GM13977 (cell line): ENCODE measurements at regions of chr1 and their contacts with region 1.

Region 1: DNA sequence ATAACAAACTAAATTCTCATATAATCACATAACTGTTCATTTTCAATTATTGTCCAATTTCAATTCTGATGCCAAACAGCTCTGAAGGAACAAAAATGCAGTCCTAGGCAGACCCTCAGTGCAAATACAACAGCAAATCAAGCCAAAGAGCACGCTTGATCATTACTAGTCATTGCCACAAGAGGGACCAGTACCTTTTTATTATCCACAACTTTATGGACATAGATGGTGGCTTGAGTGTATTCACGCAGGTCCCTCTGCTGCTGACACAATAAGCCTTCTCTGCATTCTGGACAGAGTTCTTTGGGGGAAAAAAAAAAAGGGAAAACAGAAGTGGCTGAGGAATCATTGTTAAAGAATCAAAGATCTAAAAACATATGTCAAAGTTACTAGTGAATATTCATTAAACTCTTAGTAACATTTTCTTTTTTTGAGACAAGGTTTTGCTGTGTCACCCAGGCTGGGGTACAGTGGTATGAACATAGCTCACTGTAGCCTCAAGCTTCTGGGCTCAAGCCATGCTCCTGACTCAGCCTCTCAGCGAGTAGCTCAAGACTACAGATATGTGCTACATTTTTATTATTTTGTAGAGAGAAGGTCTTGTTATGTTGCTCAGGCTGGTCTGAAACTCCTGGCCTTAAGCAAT is 34.3 kb upstream of the RAP1GAP start:
- DNase-seq: no peak
- CTCF ChIP-seq: peak; percentile 42

Region 2: DNA sequence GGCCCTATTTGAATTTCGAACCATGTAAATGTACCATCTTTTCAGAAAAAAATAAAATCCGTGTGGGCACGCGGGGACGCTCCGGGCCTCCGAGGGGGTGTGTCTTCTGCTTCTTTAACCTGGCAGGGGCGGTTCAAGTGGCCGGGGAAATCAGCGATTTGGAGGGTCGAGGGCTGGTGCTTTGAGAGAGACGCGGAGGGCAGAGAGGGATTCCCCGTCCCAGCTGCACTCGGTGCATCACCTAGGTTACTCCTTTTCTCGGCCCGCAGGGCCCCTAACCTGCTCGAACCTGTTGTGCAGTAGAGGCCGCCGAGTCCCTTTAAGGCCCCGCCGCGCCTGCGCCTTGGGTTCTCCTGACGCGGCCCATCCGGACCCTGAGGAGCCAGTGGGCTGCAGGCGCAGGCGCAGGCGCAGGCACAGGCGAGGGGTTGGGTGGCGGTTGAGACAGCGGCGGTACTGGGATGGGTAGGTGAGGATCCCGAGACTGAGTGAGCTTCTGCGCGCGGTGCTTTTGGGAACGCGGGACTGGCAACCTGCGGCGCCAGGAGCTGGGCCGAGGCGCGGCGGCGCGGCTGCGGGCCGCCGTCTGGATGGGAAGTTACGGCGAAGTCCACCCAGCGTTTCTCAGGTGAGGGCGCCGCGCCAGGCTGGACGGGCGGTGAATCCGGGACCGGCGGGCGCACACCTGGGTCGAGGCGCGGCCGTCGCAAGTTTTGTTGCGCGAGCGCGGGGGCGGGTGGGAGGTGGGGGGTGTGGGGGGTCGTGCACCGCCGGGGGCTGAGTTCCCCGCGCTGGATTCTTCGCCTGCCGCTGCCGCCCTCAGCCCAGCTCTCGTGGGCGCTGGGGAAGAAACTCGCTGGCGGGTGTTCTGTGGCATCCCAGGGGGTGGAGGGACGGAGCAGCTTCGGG is 263.5 kb before region 1 on chr1 and contains the start of gene NBPF3:
- in situ Hi-C with region 1: no loop called
- DNase-seq: peak; percentile 94
- CTCF ChIP-seq: no peak

Region 3: DNA sequence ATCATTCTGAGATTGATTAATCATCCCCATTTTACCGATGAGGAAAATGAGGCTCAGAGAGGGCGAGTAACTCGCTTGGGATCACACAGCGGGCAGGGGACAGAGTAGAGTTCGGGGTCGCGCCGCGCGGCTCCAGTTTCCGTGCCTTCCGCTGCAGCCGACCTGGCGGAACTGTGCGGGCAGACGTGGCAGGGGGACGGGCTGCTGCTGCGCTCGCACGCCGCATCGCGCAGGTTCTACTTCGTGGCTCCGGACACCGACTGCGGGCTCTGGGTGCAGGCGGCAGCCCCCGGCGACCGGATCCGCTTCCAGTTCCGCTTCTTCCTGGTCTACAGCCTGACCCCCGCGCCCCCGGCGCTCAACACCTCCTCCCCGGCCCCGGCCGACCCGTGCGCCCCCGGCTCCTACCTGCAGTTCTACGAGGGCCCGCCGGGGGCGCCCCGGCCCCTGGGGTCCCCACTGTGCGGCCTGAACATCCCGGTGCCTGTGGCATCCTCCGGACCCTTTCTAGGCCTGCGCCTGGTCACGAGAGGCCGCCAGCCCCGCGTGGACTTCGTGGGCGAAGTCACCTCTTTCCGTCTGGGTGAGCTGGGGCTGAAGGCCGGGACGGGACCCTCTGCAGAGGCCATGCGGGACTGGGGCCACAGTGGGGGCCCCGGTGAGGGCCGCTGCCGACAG is 110.9 kb after region 1 on chr1:
- in situ Hi-C with region 1: no loop called
- DNase-seq: peak; percentile 78
- CTCF ChIP-seq: peak; percentile 62

Region 4: GRCh38 chr1:21963477-21964217 is 260.2 kb after region 1 on chr1:
- in situ Hi-C with region 1: loop called (anchors 25 kb)
- DNase-seq: peak; percentile 74
- CTCF ChIP-seq: peak; percentile 83

Region 5: DNA sequence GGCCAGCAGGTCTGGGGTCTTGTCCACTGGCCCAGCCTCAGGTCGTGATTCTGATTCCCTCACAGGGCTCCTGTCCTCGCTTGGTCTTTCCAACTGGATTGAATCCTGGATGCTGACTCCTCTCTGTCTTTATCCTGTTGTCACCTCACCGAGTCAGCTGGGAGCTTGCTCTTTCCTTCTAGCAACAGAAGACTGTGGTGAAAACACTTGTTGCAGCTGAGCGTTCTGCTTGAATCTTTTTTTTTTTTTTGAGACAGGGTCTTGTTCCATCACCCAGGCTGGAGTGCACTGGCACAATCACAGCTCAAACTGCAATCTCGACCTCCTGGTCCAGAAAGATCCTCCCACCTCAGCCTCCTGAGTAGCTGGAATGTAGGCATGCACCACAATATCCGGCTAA is 447.5 kb after region 1 on chr1:
- in situ Hi-C with region 1: no loop called
- DNase-seq: no peak
- CTCF ChIP-seq: no peak